PC-3 (cell line): ENCODE measurements at regions of chr15 and their contacts with region 1.

Region 1: DNA sequence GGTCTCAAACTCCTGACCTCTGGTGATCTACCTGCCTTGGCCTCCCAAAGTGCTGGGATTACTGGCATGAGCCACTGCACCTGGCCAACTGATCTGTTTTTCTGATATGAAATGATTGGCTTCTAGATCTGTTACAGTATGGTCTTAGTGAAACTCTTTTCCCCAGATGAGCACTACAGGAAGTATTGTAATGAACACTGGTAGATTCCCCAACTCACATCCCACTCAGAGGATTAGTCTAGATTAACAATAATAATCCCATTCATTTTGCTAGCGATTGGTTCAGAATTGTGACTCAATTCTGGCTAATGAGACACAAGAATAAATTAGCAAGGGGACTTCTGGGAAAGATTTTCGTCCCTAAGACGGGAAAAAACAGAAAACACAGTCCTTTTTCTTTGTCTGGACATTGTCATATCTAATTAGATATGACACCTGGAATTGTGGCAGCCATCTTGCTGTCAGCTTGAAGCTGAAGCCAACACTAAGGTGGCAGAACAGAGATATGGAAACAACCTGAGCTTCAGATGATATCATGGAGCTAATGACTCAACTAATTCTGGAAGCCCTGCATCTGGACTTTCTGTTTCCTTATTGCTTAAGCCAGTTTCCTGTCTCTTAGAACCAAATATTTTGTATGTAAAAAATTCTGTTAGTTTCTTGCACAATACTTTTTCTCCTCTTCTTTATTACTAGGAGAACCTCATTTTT is 17.4 kb upstream of the NPTN start:
- DNase-seq: no peak
- ATAC-seq: no peak
- H3K4me3 ChIP-seq: no peak overlapping the region
- H3K27ac ChIP-seq: no peak overlapping the region
- H3K4me1 ChIP-seq: peaks cover 23% of the 10 kb centered on the region
- H3K27me3 ChIP-seq: no peaks in the 10 kb centered on the region
- CTCF ChIP-seq: no peak

Region 2: GRCh38 chr15:72835294-72835890 is 815.2 kb before region 1 on chr15:
- CTCF ChIA-PET with region 1: no interaction called
- POLR2A ChIA-PET with region 1: no interaction called
- intact Hi-C with region 1: no loop called
- DNase-seq: no peak
- ATAC-seq: no peak
- H3K4me3 ChIP-seq: no peak overlapping the region
- H3K27ac ChIP-seq: no peak overlapping the region
- H3K4me1 ChIP-seq: no peaks in the 10 kb centered on the region
- H3K27me3 ChIP-seq: peaks cover 41% of the 10 kb centered on the region
- CTCF ChIP-seq: peak; percentile 33; the same call in 1 of the 2 replicates

Region 3: DNA sequence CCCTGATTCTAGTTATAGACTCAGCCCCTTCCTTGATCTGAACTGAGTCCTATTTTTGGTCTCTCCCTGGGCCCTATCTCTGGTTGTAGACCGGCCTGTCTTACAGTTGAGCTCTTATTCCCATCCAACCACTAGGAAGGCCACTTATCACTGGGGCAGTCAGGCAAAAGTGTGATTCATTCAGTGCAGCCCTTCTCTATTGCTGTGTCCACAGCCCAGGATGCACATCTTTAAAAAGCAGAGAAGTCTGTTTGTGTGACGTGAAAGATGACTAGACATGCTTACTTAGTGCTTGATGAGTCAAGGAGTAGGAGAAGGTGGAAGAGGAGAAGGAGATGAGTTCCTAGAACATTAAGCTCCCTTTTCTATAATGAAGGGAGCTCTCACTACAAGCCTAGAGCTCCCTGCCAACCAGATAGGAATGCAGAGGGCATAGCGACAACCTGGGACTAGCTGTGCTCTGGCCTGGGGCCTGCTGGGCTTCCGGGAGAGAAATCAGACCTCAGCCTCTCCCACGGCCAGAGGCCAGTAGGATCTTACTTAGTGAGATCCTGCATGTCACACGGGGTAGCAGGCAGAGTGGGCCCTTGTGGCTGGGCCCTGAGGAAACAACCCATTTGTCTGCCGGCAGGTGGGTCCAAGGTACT is 76.9 kb after region 1 on chr15:
- CTCF ChIA-PET with region 1: interaction called, 13 read pairs
- POLR2A ChIA-PET with region 1: no interaction called
- intact Hi-C with region 1: no loop called
- DNase-seq: peak; percentile 69
- ATAC-seq: peak; percentile 78
- H3K4me3 ChIP-seq: no peak overlapping the region
- H3K27ac ChIP-seq: no peak overlapping the region
- H3K4me1 ChIP-seq: no peaks in the 10 kb centered on the region
- H3K27me3 ChIP-seq: no peaks in the 10 kb centered on the region
- CTCF ChIP-seq: no peak

Region 4: DNA sequence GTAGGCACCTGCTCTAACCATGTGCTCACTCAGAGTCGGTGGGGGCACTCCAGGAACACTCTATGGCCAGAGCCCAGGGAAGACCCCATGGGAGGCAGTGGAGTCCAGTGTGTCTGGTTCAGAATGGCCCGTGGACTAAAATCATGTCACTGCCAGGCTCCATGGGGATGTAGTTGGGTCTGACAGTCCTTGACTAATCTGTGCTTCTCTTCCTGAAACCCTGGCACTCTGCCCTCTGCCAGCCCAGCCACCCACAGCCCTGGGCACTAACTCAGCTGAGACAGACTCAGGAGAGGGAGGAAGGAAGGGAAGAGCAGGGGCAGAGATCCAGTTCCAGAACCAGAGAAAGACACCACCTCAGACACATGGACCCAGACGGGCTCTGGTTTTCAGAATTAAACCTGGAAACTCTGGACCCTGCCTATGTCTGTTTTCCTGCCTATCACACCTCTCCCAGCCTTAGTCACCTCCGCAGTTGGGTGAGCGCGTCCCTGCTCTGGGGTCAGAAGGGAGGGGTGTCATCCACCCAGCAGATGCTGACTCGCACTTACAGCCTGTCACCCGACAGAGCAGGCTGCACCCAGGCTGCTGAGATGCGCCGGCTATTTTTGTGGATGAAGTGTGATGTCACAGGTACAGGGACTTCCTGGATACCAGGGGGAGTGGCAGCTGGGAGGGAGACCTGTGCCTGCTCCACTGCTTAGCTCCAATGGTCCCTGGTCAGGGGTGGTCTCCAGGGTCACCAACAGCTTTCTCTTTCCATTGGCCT is 159.3 kb after region 1 on chr15:
- CTCF ChIA-PET with region 1: no interaction called
- POLR2A ChIA-PET with region 1: no interaction called
- intact Hi-C with region 1: no loop called
- DNase-seq: peak; percentile 50
- ATAC-seq: peak; percentile 64
- H3K4me3 ChIP-seq: no peak overlapping the region
- H3K27ac ChIP-seq: no peak overlapping the region
- H3K4me1 ChIP-seq: peaks cover 11% of the 10 kb centered on the region; the same call in 1 of the 2 replicates
- H3K27me3 ChIP-seq: no peaks in the 10 kb centered on the region
- CTCF ChIP-seq: no peak

Region 5: GRCh38 chr15:73914145-73914544 is 263.6 kb after region 1 on chr15:
- CTCF ChIA-PET with region 1: no interaction called
- POLR2A ChIA-PET with region 1: interaction called, 13 read pairs
- intact Hi-C with region 1: no loop called
- DNase-seq: no peak
- ATAC-seq: no peak
- H3K4me3 ChIP-seq: no peak overlapping the region
- H3K27ac ChIP-seq: peak overlapping the region; percentile 54
- H3K4me1 ChIP-seq: peaks cover 51% of the 10 kb centered on the region
- H3K27me3 ChIP-seq: no peaks in the 10 kb centered on the region
- CTCF ChIP-seq: no peak